ENCODE measurements at regions of chr11 and their contacts with region 1.

Region 1: DNA sequence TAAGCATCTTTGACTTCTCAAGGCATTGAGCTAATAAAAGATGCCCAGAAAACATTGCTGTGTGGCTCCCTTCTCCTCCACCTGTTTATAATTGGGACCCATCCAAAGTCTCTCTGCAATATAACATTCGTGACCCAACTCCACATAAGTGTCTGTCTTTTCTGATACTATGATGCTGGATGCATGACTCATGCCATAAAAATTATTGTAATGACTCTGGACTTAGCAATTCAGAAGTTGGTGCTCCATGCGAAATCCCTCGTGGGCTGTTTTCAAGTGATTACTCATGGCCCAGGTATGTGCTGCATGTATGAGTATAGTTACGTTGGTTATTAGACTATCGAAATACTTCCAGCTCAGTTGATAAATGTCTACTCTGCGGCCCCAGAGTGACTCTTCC is 11.7 kb downstream of the FJX1 start:
- DNase-seq: peak; percentile 99
- ATAC-seq: peak; percentile 97
- H3K4me3 ChIP-seq: no peak overlapping the region
- H3K27ac ChIP-seq: peak overlapping the region; percentile 52
- H3K4me1 ChIP-seq: peaks cover 21% of the 10 kb centered on the region
- H3K27me3 ChIP-seq: no peaks in the 10 kb centered on the region
- CTCF ChIP-seq: no peak

Region 2: GRCh38 chr11:35579557-35580396 is 50.1 kb before region 1 on chr11:
- CTCF ChIA-PET with region 1: no interaction called
- POLR2A ChIA-PET with region 1: no interaction called
- intact Hi-C with region 1: no loop called
- DNase-seq: peak; percentile 86
- ATAC-seq: peak; percentile 82
- H3K4me3 ChIP-seq: peak overlapping the region; percentile 54; the same call in 1 of the 2 replicates
- H3K27ac ChIP-seq: peak overlapping the region; percentile 84
- H3K4me1 ChIP-seq: peaks cover 33% of the 10 kb centered on the region
- H3K27me3 ChIP-seq: no peaks in the 10 kb centered on the region
- CTCF ChIP-seq: no peak

Region 3: GRCh38 chr11:35650006-35650405 is 20.1 kb after region 1 on chr11:
- CTCF ChIA-PET with region 1: no interaction called
- POLR2A ChIA-PET with region 1: no interaction called
- intact Hi-C with region 1: no loop called
- DNase-seq: peak; percentile 54
- ATAC-seq: no peak
- H3K4me3 ChIP-seq: no peak overlapping the region
- H3K27ac ChIP-seq: no peak overlapping the region
- H3K4me1 ChIP-seq: no peaks in the 10 kb centered on the region
- H3K27me3 ChIP-seq: no peaks in the 10 kb centered on the region
- CTCF ChIP-seq: no peak

Region 4: DNA sequence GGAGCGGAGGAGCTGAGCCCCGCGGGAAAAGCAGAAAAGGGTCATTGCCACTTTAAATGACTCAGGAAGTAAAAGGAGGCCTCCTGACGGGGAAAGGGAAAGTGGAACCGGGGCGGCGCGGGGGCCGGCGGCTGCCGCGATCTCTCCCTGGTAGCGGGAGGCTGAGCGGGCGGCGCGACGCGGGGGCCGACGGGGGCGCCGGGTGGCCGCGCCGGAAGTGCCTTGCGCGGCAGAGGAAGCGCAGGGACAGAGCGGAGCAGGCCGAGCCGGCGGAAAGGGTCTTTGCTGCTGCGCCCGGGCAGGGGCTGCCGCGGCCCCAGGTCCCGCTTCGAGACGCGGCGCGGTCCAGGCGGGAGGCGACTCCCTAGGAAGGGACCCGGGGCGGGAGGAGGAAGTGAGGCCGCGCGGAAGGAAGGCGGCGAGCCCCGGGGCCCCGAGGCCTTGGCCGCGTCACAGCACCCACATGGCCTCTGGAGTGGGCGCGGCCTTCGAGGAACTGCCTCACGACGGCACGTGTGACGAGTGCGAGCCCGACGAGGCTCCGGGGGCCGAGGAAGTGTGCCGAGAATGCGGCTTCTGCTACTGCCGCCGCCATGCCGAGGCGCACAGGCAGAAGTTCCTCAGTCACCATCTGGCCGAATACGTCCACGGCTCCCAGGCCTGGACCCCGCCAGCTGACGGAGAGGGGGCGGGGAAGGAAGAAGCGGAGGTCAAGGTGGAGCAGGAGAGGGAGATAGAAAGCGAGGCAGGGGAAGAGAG is 32.9 kb after region 1 on chr11 and contains the start of gene TRIM44:
- CTCF ChIA-PET with region 1: interaction called, 3 read pairs
- POLR2A ChIA-PET with region 1: no interaction called
- intact Hi-C with region 1: loop called (anchors 2 kb)
- DNase-seq: peak; percentile 85
- ATAC-seq: peak; percentile 62
- H3K4me3 ChIP-seq: peak within 1 kb of the TSS; percentile 74
- H3K27ac ChIP-seq: peak within 1 kb of the TSS; percentile 91
- H3K4me1 ChIP-seq: peaks cover 30% of the 10 kb centered on the region
- H3K27me3 ChIP-seq: no peaks in the 10 kb centered on the region
- CTCF ChIP-seq: no peak
- total RNA-seq, gene TRIM44: 14.0 TPM in 2 replicates

Region 5: GRCh38 chr11:35919244-35919643 is 289.3 kb after region 1 on chr11:
- CTCF ChIA-PET with region 1: no interaction called
- POLR2A ChIA-PET with region 1: no interaction called
- intact Hi-C with region 1: no loop called
- DNase-seq: peak; percentile 51
- ATAC-seq: peak; percentile 70
- H3K4me3 ChIP-seq: no peak overlapping the region
- H3K27ac ChIP-seq: no peak overlapping the region
- H3K4me1 ChIP-seq: peaks cover 12% of the 10 kb centered on the region
- H3K27me3 ChIP-seq: no peaks in the 10 kb centered on the region
- CTCF ChIP-seq: no peak